Gastrocnemius medialis (tissue), 4 donors: ENCODE measurements at regions of chr17 and their contacts with region 1.

Region 1: GRCh38 chr17:67265436-67266019 is 20.5 kb upstream of the HELZ start:
- DNase-seq: no peak
- ATAC-seq: no peak
- H3K4me3 ChIP-seq: no peak overlapping the region
- H3K27ac ChIP-seq: no peak overlapping the region
- H3K4me1 ChIP-seq: no peaks in the 10 kb centered on the region
- H3K27me3 ChIP-seq: no peaks in the 10 kb centered on the region
- CTCF ChIP-seq: no peak
- POLR2A ChIP-seq: no peak

Region 2: DNA sequence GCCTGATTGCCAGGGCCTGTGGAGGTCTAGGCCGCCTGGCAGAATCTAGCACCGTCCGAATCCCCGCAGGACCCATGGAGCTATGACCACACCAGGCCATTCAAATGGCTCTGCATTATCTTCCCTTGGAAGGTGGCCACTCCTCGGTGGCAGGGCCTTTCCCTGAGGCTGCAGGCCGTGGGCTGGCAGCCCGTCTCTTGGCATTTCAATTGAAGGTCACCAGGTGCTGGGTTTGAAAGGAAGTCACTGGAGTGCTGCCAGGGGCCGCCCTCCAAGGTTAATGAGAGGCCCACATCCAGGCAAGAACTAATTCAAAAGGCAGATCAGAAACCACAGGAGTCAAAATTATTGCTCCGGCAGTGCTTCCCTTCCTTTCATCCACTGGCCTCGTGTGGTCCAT is 458.3 kb before region 1 on chr17:
- in situ Hi-C with region 1: no loop called
- intact Hi-C with region 1: loop called (anchors 5 kb)
- DNase-seq: no peak
- ATAC-seq: no peak
- H3K4me3 ChIP-seq: no peak overlapping the region
- H3K27ac ChIP-seq: no peak overlapping the region
- H3K4me1 ChIP-seq: no peaks in the 10 kb centered on the region
- H3K27me3 ChIP-seq: no peaks in the 10 kb centered on the region
- CTCF ChIP-seq: no peak
- POLR2A ChIP-seq: no peak